GM12878 (cell line): ENCODE measurements at regions of chr6 and their contacts with region 1.

Region 1: GRCh38 chr6:169831450-169832246 is 80.2 kb downstream of the ERMARD start:
- DNase-seq: no peak
- ATAC-seq: peak; percentile 95
- H3K4me3 ChIP-seq: no peak overlapping the region
- H3K27ac ChIP-seq: no peak overlapping the region
- H3K4me1 ChIP-seq: no peaks in the 10 kb centered on the region
- H3K27me3 ChIP-seq: no peaks in the 10 kb centered on the region
- CTCF ChIP-seq: peak; percentile 79 to 84 (median 80)
- EP300 ChIP-seq: no peak
- POLR2A ChIP-seq: no peak
- RAD21 ChIP-seq: peak; percentile 75

Region 2: GRCh38 chr6:169529931-169530751 is 301.5 kb before region 1 on chr6:
- CTCF ChIA-PET with region 1: no interaction called
- POLR2A ChIA-PET with region 1: no interaction called
- RAD21 ChIA-PET with region 1: no interaction called
- SMC1A ChIA-PET with region 1: no interaction called
- in situ Hi-C with region 1: no loop called
- intact Hi-C with region 1: no loop called
- DNase-seq: no peak
- ATAC-seq: no peak
- H3K4me3 ChIP-seq: no peak overlapping the region
- H3K27ac ChIP-seq: no peak overlapping the region
- H3K4me1 ChIP-seq: no peaks in the 10 kb centered on the region
- H3K27me3 ChIP-seq: no peaks in the 10 kb centered on the region
- CTCF ChIP-seq: no peak
- EP300 ChIP-seq: no peak
- POLR2A ChIP-seq: no peak
- RAD21 ChIP-seq: no peak

Region 3: GRCh38 chr6:170209572-170210351 is 378.1 kb after region 1 on chr6:
- CTCF ChIA-PET with region 1: no interaction called
- POLR2A ChIA-PET with region 1: no interaction called
- RAD21 ChIA-PET with region 1: no interaction called
- SMC1A ChIA-PET with region 1: no interaction called
- in situ Hi-C with region 1: no loop called
- intact Hi-C with region 1: no loop called
- DNase-seq: no peak
- ATAC-seq: peak; percentile 49
- H3K4me3 ChIP-seq: no peak overlapping the region
- H3K27ac ChIP-seq: no peak overlapping the region
- H3K4me1 ChIP-seq: no peaks in the 10 kb centered on the region
- H3K27me3 ChIP-seq: no peaks in the 10 kb centered on the region
- CTCF ChIP-seq: no peak
- EP300 ChIP-seq: no peak
- POLR2A ChIP-seq: no peak
- RAD21 ChIP-seq: no peak

Region 4: DNA sequence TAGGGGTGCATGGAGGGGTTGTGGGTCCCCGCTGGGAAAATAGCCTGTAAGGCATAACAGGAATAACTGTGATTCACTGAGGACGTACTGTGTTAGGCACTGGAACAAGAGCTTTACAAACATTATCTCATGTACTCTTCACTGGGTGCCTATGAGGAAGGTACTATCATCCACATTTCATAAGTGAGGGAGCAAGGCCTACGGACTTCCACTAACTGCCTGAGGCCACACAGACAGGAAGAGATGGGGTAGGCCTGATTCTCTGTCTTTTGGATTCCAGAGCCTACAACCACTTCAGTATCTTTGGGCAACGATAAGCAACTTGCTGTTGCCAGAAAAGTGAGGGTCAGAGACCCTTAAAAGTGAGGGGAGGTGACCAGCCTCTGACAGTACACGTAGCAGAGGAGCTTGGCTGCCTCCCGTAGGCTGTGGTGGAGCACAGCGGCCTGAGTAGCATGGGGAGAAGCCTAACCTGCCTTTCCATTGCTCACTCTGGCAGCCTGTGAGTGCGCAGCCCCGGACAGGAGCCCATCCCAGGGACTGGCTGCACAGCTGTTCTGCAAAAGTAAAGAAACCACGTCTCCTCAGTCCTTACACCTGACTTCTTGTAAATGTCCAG is 691.0 kb after region 1 on chr6:
- CTCF ChIA-PET with region 1: interaction called, 40 read pairs
- POLR2A ChIA-PET with region 1: no interaction called
- RAD21 ChIA-PET with region 1: interaction called, 18 read pairs
- SMC1A ChIA-PET with region 1: interaction called, 25 read pairs
- in situ Hi-C with region 1: loop called (anchors 5 kb)
- intact Hi-C with region 1: loop called (anchors 1 kb)
- DNase-seq: no peak
- ATAC-seq: peak; percentile 79
- H3K4me3 ChIP-seq: no peak overlapping the region
- H3K27ac ChIP-seq: no peak overlapping the region
- H3K4me1 ChIP-seq: no peaks in the 10 kb centered on the region
- H3K27me3 ChIP-seq: no peaks in the 10 kb centered on the region
- CTCF ChIP-seq: peak; percentile 43 to 52 (median 45); a peak in 5 of 6 replicates
- EP300 ChIP-seq: no peak
- POLR2A ChIP-seq: no peak
- RAD21 ChIP-seq: peak; percentile 49